Adrenal gland (tissue), 19 donors: ENCODE measurements at regions of chr11 and their contacts with region 1.

Region 1: DNA sequence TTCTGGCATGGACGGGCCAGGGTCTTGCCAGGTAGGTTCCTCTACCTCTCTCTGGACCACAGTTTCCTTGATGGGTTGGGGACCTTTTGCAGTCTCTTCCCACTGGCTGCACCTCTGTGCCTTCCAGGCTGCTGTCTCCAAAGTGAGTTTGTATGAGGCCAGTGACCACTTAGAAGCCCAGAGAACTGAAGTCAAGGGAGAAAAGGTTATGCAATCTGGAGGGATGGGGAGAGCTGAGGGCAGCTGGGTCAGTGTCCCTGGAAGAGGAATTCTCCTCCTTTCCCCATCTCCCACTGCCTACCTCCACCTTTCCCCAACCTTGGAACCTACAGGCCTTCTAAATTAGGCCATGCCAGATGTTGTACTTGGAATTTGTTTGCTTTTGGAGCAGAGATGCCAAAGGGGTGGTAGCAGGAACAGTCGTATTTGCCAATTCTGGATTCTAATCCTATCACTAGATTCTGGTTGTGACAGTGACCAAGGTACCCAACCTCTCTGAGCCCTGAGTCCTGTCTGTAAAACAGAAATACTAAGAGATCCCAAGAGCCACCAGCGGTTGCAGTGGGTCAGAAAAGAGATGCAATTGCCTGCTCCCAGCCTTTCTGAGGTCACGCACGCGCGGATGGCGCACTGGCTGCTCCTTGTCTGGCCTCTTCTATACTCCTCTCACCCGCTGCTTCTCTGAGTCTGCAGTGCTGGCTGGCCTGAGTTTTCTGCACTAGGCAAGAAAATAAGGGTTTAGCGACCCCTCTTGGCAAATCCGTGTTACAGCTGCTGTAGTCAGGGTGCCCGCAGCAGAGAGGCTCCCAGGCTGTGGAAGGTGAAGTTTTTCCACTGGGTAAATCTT is 10.7 kb upstream of the ACCSL start:
- DNase-seq: peak; percentile 86 to 97 (median 94)
- H3K4me3 ChIP-seq: no peak overlapping the region
- H3K27ac ChIP-seq: peak overlapping the region in 2 of 5 donors; percentile 68 to 79
- H3K4me1 ChIP-seq: peaks cover 0 to 20% of the 10 kb centered on the region in 2 donors
- H3K27me3 ChIP-seq: no peaks in the 10 kb centered on the region
- CTCF ChIP-seq: peak; percentile 80 to 96 (median 93)
- POLR2A ChIP-seq: no peak

Region 2: DNA sequence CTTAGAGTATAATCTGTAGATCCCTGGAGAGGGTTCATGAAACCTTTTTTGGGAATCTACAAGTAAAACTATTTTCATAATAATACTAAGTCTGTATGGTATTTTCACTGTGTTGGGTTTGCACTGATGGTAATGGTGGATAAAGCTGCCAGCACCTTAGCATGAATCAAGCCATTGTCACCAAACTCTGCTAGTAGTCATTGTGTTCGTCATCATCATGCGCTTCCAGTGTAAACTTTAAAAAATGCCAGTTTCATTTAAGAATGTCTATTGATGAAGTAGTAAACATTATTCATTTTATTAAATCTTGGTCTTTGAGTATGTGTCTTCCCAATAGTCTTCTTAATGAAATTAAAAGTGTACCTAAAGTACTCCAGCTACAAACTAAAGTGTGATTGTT is 141.4 kb before region 1 on chr11:
- intact Hi-C with region 1: loop called (anchors 5 kb)
- DNase-seq: no peak
- H3K4me3 ChIP-seq: no peak overlapping the region
- H3K27ac ChIP-seq: no peak overlapping the region
- H3K4me1 ChIP-seq: no peaks in the 10 kb centered on the region
- H3K27me3 ChIP-seq: no peaks in the 10 kb centered on the region
- CTCF ChIP-seq: no peak
- POLR2A ChIP-seq: no peak

Region 3: DNA sequence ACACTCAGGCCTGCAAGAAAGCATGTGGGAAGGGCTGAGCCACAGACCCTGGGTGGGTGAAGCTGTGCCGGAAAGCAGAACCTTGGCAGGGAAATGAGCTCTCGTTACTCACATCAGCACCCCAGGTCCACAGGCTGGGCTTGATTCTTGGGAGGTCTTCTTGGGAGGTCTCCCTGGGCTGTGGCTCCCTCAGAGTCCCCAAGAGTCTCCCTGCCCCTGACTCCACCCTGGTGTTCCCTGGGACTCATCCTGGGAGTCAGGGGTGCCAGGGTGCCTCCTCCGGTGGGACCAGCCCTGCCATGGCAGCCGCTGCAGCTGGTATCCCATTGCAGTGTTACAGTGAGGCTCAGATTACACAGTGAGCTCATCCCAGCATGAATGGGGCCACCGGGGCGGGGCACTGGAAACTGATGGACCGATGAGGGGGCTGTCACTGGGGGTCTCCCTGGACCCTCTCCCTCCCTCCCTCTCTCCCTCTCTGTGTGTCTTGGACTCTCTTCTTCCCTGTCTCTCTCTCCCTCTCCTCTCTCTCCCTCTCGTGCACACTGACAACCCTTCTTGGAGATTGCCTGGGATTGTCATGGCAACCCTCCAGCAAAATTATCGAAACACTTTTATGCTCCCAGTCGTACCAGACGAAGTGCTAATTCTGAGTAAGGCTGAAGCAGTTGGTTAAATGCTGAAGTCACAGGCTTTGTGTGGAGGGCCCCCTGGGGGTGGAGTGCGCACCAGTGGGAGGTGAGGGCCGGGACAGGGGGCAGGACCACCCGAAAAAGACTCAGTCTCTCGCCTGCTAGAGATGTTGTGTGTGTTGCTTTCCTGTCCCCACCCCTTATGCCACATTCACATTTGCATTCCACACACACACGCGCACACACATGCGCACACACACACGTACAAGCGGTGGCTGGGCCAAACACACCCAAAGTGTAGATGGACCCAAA is 103.2 kb before region 1 on chr11:
- intact Hi-C with region 1: no loop called
- DNase-seq: peak in 1 of 7 donors; percentile 58
- H3K4me3 ChIP-seq: no peak overlapping the region
- H3K27ac ChIP-seq: peak overlapping the region in 1 of 5 donors; percentile 2
- H3K4me1 ChIP-seq: peaks cover 0 to 11% of the 10 kb centered on the region in 2 donors
- H3K27me3 ChIP-seq: no peaks in the 10 kb centered on the region
- CTCF ChIP-seq: peak in 1 of 6 experiments; percentile 6
- POLR2A ChIP-seq: no peak

Region 4: GRCh38 chr11:43944761-43945311 is 92.2 kb before region 1 on chr11:
- intact Hi-C with region 1: loop called (anchors 10 kb)
- DNase-seq: peak; percentile 77 to 91 (median 89)
- H3K4me3 ChIP-seq: peak overlapping the region in 3 of 4 donors; percentile 33 to 75 (median 59)
- H3K27ac ChIP-seq: peak overlapping the region; percentile 51 to 96 (median 79)
- H3K4me1 ChIP-seq: peaks cover 10 to 22% of the 10 kb centered on the region in 2 donors
- H3K27me3 ChIP-seq: no peaks in the 10 kb centered on the region
- CTCF ChIP-seq: peak; percentile 74 to 88 (median 86)
- POLR2A ChIP-seq: peak in 1 of 2 donors; percentile 18